ENCODE measurements at regions of chr2 and their contacts with region 1.

Region 1: DNA sequence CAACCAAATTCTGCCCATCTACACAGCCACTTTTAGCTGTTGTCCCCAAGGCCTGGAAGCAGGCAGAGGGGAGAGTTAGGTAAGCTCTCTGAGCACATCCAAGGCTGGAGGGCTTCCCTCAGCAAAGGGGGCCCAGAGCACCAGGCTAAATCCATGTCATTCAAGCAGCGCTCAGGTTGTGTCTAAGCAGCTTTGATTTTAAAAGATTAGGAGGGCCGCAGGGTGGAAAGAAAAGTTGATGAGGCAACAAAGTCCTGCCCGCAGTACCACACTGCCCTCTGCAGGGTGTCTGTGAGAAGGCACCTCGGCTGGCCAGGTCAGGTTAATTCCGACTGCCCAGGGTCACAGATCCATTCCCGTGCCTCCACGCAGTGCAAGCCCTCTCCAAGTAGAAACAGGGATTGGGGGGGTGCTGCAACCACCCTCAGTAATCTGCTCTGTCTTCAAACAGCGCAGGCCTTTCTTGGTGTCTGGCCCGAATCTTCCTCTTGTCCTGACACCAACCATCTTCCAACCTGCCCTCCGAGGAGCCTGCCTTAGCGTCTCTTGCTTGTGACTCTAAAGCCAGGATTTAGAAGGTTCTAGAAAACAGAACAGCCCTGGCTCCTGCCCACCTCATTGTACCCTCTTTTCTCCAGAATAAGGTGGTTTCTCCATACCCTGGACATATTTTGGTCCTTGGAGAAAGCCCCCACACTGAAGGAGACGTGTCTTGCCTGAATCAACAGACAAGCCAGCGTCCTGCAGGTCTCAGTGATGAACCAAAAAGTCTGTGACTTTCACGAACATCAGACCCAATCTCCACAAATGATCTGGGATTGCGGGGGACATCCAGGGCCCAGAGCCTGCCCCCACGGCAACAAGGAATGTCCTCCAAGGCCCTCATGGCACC is 289.2 kb downstream of the TNS1 start:
- DNase-seq: peak; percentile 63 to 96 (median 88)

Region 2: GRCh38 chr2:216698895-216699294 is 1014.7 kb before region 1 on chr2:
- intact Hi-C with region 1: loop called (anchors 10 kb)
- DNase-seq: peak in 13 of 42 donors; percentile 19 to 74 (median 44)

Region 3: DNA sequence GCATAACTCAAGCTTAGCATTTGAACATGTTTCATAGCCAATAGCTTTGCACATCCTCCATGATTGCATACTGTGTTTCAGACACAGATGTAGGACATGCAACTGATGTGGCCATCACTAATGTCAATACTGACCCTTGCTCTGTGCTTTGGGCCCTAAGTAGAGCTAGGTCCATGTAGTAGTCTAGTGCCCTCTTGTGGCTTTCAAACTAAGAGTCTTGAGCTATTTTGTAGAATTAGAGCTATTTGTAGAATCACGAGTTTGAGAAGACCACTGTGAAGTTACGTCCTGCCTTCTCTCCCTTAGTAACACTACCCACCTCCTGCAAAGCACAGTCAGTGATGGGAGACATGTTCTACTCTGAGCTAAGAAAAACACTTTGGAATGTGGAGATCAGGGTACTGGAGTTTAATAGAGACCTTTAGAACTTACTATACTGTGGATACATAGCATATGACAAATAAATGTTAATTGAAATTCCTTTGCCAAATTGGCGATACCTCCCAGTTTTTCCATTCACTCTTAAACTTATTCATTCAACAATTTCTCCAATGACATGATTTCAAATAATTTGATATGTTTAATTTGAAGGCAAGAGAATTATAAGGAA is 547.3 kb before region 1 on chr2:
- intact Hi-C with region 1: loop called (anchors 10 kb)
- DNase-seq: peak in 12 of 42 donors; percentile 8 to 63 (median 24)

Region 4: GRCh38 chr2:217650716-217651360 is 62.8 kb before region 1 on chr2:
- intact Hi-C with region 1: loop called (anchors 10 kb)
- DNase-seq: peak in 33 of 42 donors; percentile 3 to 81 (median 53)

Region 5: GRCh38 chr2:217756375-217757107 is 42.9 kb after region 1 on chr2:
- intact Hi-C with region 1: loop called (anchors 5 kb)
- DNase-seq: peak; percentile 64 to 95 (median 87)